ENCODE measurements at regions of chr18 and their contacts with region 1.

Region 1: GRCh38 chr18:70288851-70289328 is at the start of gene SOCS6:
- DNase-seq: peak; percentile 83 to 88
- ATAC-seq: peak; percentile 58
- H3K4me3 ChIP-seq: peak within 1 kb of the TSS; percentile 93 to 96
- H3K27ac ChIP-seq: peak within 1 kb of the TSS; percentile 87 to 91
- H3K4me1 ChIP-seq: peaks cover 0 to 5% of the 10 kb centered on the region in 2 donors
- H3K27me3 ChIP-seq: no peaks in the 10 kb centered on the region
- total RNA-seq, gene SOCS6: 19.6 to 22.8 TPM

Region 2: GRCh38 chr18:70036771-70037347 is 252.0 kb before region 1 on chr18:
- intact Hi-C with region 1: no loop called
- DNase-seq: no peak
- ATAC-seq: no peak
- H3K4me3 ChIP-seq: no peak overlapping the region
- H3K27ac ChIP-seq: no peak overlapping the region
- H3K4me1 ChIP-seq: no peaks in the 10 kb centered on the region
- H3K27me3 ChIP-seq: no peaks in the 10 kb centered on the region

Region 3: GRCh38 chr18:70195852-70196434 is 92.9 kb before region 1 on chr18:
- intact Hi-C with region 1: loop called in 1 of 2 experiments (anchors 5 kb)
- DNase-seq: no peak
- ATAC-seq: no peak
- H3K4me3 ChIP-seq: no peak overlapping the region
- H3K27ac ChIP-seq: no peak overlapping the region
- H3K4me1 ChIP-seq: no peaks in the 10 kb centered on the region
- H3K27me3 ChIP-seq: no peaks in the 10 kb centered on the region

Region 4: DNA sequence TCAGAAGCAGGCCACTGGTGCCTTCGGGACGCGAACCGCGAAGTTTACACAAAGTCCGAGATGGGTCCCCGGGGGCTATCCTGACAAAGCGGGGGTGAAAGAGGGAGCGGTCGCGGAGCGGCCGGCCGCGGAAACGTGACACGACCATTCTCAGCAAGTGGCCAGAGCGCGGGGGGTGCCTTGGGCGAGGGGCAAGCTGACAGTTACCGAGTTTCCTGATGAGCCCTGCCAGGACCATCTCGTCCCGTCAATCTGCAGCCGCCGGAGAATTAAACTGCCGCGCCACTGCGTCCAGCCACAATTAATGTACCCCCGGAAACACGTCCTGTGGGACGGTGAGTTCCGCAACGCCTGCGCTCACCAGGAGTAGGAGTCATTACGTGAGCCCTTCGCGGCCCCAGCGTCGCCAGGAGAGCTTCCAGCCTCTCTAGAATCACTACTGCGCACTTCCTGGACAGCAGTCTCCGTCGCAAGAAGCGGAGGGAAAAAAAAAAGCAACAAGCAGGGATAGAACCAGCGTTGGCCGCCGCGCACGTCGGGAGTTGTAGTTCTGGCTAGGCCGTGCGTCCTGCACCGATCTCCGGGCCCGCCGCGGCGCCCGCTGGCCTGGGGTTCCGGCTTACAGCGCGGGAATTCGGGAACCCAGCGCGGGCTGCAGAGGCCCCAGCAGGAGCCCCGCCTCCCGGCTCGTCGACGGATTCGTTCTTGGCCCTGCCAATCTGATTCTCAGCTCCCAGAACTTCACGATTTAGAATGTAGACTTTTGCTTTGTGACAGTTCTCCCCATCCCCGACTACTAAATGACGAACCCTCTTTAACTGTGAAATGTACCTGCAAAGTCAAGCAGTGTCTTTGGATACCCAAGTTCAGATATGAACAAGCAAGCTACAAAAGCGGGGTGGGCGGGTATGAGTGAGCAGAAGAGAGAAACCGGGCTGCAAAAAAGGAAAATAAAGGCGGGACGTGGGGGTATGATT is 83.2 kb before region 1 on chr18 and contains the start of gene RTTN:
- intact Hi-C with region 1: loop called (anchors 2 to 5 kb)
- DNase-seq: peak; percentile 96 to 98
- ATAC-seq: peak; percentile 100
- H3K4me3 ChIP-seq: peak within 1 kb of the TSS; percentile 95 to 98
- H3K27ac ChIP-seq: peak within 1 kb of the TSS; percentile 91 to 99
- H3K4me1 ChIP-seq: no peaks in the 10 kb centered on the region
- H3K27me3 ChIP-seq: no peaks in the 10 kb centered on the region
- total RNA-seq, gene RTTN: 16.5 to 17.5 TPM

Region 5: GRCh38 chr18:70216788-70217187 is 72.1 kb before region 1 on chr18:
- intact Hi-C with region 1: no loop called
- DNase-seq: no peak
- ATAC-seq: no peak
- H3K4me3 ChIP-seq: no peak overlapping the region
- H3K27ac ChIP-seq: no peak overlapping the region
- H3K4me1 ChIP-seq: no peaks in the 10 kb centered on the region
- H3K27me3 ChIP-seq: no peaks in the 10 kb centered on the region

Region 6: DNA sequence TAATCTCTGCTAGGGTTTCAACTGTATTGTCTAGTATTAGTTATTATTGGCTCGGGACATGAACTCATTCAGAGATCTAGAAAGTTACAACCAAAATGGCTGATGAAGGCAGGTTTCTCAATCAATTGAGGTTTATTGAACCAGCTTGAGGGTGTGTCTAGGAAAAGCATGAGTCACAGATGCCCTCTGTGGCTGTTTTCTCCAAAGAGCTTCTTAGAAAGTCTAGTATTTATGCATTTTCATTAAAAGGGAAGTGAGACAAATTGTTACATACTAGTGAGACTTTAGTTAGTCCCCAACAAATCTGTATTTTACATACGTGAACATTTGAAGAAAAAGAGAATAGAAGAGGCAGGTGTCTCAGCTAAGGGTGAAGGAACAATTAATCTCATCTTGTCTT is 60.3 kb before region 1 on chr18:
- intact Hi-C with region 1: no loop called
- DNase-seq: no peak
- ATAC-seq: no peak
- H3K4me3 ChIP-seq: no peak overlapping the region
- H3K27ac ChIP-seq: no peak overlapping the region
- H3K4me1 ChIP-seq: no peaks in the 10 kb centered on the region
- H3K27me3 ChIP-seq: no peaks in the 10 kb centered on the region

Region 7: DNA sequence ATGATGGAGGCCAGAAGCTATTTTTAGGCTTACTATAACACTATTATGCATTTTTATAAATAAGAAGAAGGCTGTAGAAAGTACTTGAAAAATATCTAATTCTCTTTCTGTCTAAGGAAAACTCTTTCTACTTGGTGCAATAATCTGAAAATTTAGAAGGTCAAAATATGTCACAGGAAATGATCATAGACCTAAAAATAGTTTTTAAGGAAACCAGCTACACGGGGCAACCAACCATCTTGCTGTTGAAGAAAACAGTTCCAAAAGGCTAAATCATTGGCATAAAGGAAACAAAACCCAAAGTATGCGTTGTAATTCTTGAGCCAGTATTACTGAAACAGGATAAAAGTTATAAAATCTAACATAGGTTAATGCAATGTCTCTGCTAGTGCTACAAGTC is 40.2 kb after region 1 on chr18:
- intact Hi-C with region 1: loop called in 1 of 2 experiments (anchors 5 kb)
- DNase-seq: no peak
- ATAC-seq: no peak
- H3K4me3 ChIP-seq: no peak overlapping the region
- H3K27ac ChIP-seq: peak overlapping the region in 1 of 2 donors; percentile 82
- H3K4me1 ChIP-seq: peaks cover 0 to 4% of the 10 kb centered on the region in 2 donors
- H3K27me3 ChIP-seq: no peaks in the 10 kb centered on the region

Region 8: GRCh38 chr18:70421471-70422390 is 132.8 kb after region 1 on chr18:
- intact Hi-C with region 1: loop called in 1 of 2 experiments (anchors 5 kb)
- DNase-seq: peak; percentile 90 to 91
- ATAC-seq: peak; percentile 87
- H3K4me3 ChIP-seq: no peak overlapping the region
- H3K27ac ChIP-seq: no peak overlapping the region
- H3K4me1 ChIP-seq: no peaks in the 10 kb centered on the region
- H3K27me3 ChIP-seq: no peaks in the 10 kb centered on the region

Region 9: GRCh38 chr18:70431203-70431624 is 142.3 kb after region 1 on chr18:
- intact Hi-C with region 1: loop called in 1 of 2 experiments (anchors 5 kb)
- DNase-seq: no peak
- ATAC-seq: no peak
- H3K4me3 ChIP-seq: no peak overlapping the region
- H3K27ac ChIP-seq: no peak overlapping the region
- H3K4me1 ChIP-seq: no peaks in the 10 kb centered on the region
- H3K27me3 ChIP-seq: no peaks in the 10 kb centered on the region

Measured in aorta (tissue), 5 donors.